CD4-positive, alpha-beta T cell (primary cell): ENCODE measurements at regions of chr12 and their contacts with region 1.

Region 1: DNA sequence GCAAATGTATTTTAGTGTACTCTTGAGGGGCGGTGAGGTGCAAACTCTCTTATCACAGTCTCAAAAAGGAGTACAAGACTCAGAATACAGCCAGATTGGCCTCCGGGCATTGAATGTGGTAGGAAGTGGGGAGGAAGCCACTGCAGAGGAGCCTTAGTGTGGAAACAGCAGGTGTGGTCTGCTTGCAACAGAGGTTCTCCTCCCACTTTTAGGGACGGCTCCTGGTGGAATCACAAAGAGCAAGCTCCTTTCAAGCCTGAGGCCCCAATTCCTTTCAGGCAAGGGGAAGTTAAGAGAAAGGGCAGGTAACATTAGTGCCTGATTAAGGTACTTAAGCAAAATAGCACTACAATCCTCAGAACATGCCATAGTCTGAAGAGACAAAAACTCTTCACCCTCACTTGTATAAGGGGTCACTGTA is 23.7 kb upstream of the SLC2A3 start:
- DNase-seq: peak in 13 of 14 experiments; percentile 22 to 77 (median 37)
- ATAC-seq: peak; percentile 24
- H3K4me3 ChIP-seq: peak overlapping the region; percentile 64
- H3K4me3 Mint-ChIP-seq: peak overlapping the region; percentile 87
- H3K27ac ChIP-seq: peak overlapping the region; percentile 59 to 76
- H3K27ac Mint-ChIP-seq: peak overlapping the region; percentile 90
- H3K4me1 ChIP-seq: peaks cover 23% of the 10 kb centered on the region
- H3K4me1 Mint-ChIP-seq: peaks cover 34% of the 10 kb centered on the region
- H3K27me3 ChIP-seq: no peaks in the 10 kb centered on the region
- H3K27me3 Mint-ChIP-seq: no peaks in the 10 kb centered on the region
- CTCF ChIP-seq: no peak

Region 2: DNA sequence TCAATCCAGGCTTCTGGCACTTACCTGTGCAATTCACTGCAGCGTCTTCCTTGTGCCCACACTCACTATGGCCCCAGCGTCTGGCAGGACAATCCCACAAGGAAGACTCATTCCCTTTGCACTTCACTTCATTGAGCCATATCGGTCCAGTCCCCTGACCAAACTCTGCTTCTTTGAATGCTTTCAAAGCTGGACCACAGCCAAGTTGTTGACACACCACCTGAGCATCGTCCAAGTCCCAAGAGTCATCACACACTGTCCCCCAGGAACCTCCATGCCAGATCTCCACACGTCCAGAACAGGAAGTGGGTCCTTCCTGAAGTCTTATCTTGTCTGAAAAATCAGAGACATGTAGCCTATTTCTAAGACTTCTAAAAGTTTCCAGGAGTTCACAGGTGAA is 476.4 kb before region 1 on chr12:
- CTCF ChIA-PET with region 1: no interaction called
- POLR2A ChIA-PET with region 1: no interaction called
- intact Hi-C with region 1: no loop called
- DNase-seq: no peak
- ATAC-seq: no peak
- H3K4me3 ChIP-seq: no peak overlapping the region
- H3K4me3 Mint-ChIP-seq: no peak overlapping the region
- H3K27ac ChIP-seq: no peak overlapping the region
- H3K27ac Mint-ChIP-seq: no peak overlapping the region
- H3K4me1 ChIP-seq: no peaks in the 10 kb centered on the region
- H3K4me1 Mint-ChIP-seq: no peaks in the 10 kb centered on the region
- H3K27me3 ChIP-seq: peaks cover 0 to 4% of the 10 kb centered on the region in 2 experiments
- H3K27me3 Mint-ChIP-seq: no peaks in the 10 kb centered on the region
- CTCF ChIP-seq: no peak

Region 3: GRCh38 chr12:7853557-7853956 is 106.2 kb before region 1 on chr12:
- CTCF ChIA-PET with region 1: no interaction called
- POLR2A ChIA-PET with region 1: no interaction called
- intact Hi-C with region 1: no loop called
- DNase-seq: no peak
- ATAC-seq: no peak
- H3K4me3 ChIP-seq: no peak overlapping the region
- H3K4me3 Mint-ChIP-seq: no peak overlapping the region
- H3K27ac ChIP-seq: no peak overlapping the region
- H3K27ac Mint-ChIP-seq: no peak overlapping the region
- H3K4me1 ChIP-seq: no peaks in the 10 kb centered on the region
- H3K4me1 Mint-ChIP-seq: no peaks in the 10 kb centered on the region
- H3K27me3 ChIP-seq: peaks cover 0 to 3% of the 10 kb centered on the region in 2 experiments
- H3K27me3 Mint-ChIP-seq: peaks cover 22% of the 10 kb centered on the region
- CTCF ChIP-seq: no peak

Region 4: GRCh38 chr12:7947011-7947699 is 12.6 kb before region 1 on chr12:
- CTCF ChIA-PET with region 1: interaction called, 10 read pairs
- POLR2A ChIA-PET with region 1: interaction called, 12 read pairs
- intact Hi-C with region 1: no loop called
- DNase-seq: no peak
- ATAC-seq: no peak
- H3K4me3 ChIP-seq: no peak overlapping the region
- H3K4me3 Mint-ChIP-seq: no peak overlapping the region
- H3K27ac ChIP-seq: no peak overlapping the region
- H3K27ac Mint-ChIP-seq: no peak overlapping the region
- H3K4me1 ChIP-seq: no peaks in the 10 kb centered on the region
- H3K4me1 Mint-ChIP-seq: no peaks in the 10 kb centered on the region
- H3K27me3 ChIP-seq: no peaks in the 10 kb centered on the region
- H3K27me3 Mint-ChIP-seq: no peaks in the 10 kb centered on the region
- CTCF ChIP-seq: no peak

Region 5: GRCh38 chr12:7970475-7971252 is 11.0 kb after region 1 on chr12:
- CTCF ChIA-PET with region 1: interaction called, 31 read pairs
- POLR2A ChIA-PET with region 1: interaction called, 86 read pairs
- intact Hi-C with region 1: loop called in 1 of 2 experiments (anchors 1 kb)
- DNase-seq: peak; percentile 69 to 95 (median 80)
- ATAC-seq: peak; percentile 83
- H3K4me3 ChIP-seq: peak overlapping the region; percentile 68
- H3K4me3 Mint-ChIP-seq: peak overlapping the region; percentile 88
- H3K27ac ChIP-seq: peak overlapping the region; percentile 76 to 87
- H3K27ac Mint-ChIP-seq: peak overlapping the region; percentile 94
- H3K4me1 ChIP-seq: peaks cover 25% of the 10 kb centered on the region
- H3K4me1 Mint-ChIP-seq: peaks cover 30% of the 10 kb centered on the region
- H3K27me3 ChIP-seq: no peaks in the 10 kb centered on the region
- H3K27me3 Mint-ChIP-seq: no peaks in the 10 kb centered on the region
- CTCF ChIP-seq: no peak

Region 6: DNA sequence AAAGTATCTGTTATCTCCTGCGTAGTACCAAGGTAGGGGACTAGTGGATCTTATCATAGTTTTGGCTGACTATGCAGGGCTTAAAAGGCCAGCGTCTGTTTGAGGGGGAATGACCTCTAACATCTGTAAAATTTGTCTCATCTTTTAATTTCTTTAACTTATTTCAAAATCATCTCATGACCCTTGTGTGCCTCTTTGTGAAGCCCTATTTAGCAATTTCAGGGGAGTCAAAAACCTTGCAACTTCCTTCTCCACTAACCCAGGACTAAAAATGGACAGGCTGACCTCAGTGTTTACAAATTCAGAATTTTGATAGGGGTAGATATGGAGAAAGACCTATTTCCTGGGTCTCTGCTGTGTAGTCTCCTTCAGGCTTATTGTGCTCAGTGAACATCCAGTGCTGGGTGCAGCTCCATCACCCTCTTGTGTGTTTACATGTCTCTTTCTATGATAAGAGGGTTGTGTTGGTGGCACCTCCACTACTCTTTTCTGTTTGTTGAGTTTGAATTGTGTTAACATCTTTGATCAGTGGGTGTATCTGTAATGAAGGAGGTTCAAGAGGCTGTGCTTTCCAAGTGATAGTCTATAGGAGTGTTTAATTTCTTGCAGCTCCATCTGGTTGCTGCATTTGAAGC is 136.7 kb after region 1 on chr12:
- CTCF ChIA-PET with region 1: no interaction called
- POLR2A ChIA-PET with region 1: no interaction called
- intact Hi-C with region 1: no loop called
- DNase-seq: no peak
- ATAC-seq: no peak
- H3K4me3 ChIP-seq: no peak overlapping the region
- H3K4me3 Mint-ChIP-seq: no peak overlapping the region
- H3K27ac ChIP-seq: no peak overlapping the region
- H3K27ac Mint-ChIP-seq: no peak overlapping the region
- H3K4me1 ChIP-seq: no peaks in the 10 kb centered on the region
- H3K4me1 Mint-ChIP-seq: peaks cover 4% of the 10 kb centered on the region
- H3K27me3 ChIP-seq: no peaks in the 10 kb centered on the region
- H3K27me3 Mint-ChIP-seq: no peaks in the 10 kb centered on the region
- CTCF ChIP-seq: no peak